Psoas muscle (tissue), 8 donors: ENCODE measurements at regions of chr3 and their contacts with region 1.

Region 1: GRCh38 chr3:16550676-16551341 is 37.3 kb upstream of the RFTN1 start:
- DNase-seq: peak; percentile 32 to 60
- ATAC-seq: peak; percentile 90 to 98 (median 96)
- H3K4me3 ChIP-seq: no peak overlapping the region
- H3K27ac ChIP-seq: no peak overlapping the region
- H3K4me1 ChIP-seq: peaks cover 4% of the 10 kb centered on the region
- H3K27me3 ChIP-seq: no peaks in the 10 kb centered on the region
- CTCF ChIP-seq: peak; percentile 94

Region 2: DNA sequence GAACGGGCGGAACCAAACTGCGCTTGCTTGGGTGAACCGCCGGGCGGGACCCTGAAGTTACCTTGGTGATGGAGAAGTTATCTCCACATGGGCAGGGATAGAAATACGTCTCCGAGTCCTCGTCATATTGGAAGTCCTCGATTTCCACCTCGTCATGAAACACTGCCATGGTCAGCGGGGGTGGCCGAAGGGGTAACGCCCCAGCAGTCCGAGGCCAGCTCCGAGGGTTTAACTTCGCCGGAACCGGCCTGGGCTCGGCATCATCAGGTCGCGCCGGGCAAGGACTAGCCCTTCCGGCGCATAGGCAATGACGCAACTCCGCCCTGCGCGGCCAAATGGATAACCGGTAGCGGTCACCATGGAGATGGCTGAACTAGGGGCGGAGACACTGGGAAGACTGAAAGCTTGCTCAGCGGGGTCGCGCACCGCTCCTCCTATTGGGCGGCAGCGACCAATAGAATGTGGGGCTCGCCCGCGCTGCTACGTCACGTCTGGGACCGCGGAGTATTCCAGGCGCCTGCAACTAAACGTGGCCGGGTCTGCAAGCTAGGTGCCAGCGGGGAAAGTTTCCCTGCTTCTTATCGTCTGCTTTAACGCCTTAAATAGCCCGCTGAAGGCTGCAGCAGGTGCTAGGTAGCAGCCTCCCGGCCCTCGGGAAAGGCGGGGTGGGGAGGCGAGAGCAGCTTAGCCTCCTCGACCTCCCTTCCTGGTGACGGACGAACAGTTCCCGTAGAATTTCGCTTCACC is 285.9 kb before region 1 on chr3 and contains the starts of genes DPH3 and OXNAD1:
- intact Hi-C with region 1: loop called (anchors 1 to 5 kb)
- DNase-seq: peak; percentile 100
- ATAC-seq: peak; percentile 97 to 99 (median 98)
- H3K4me3 ChIP-seq: peak within 1 kb of the TSS; percentile 74
- H3K27ac ChIP-seq: peak within 1 kb of the TSS; percentile 89
- H3K4me1 ChIP-seq: peaks cover 60% of the 10 kb centered on the region
- H3K27me3 ChIP-seq: no peaks in the 10 kb centered on the region
- CTCF ChIP-seq: peak; percentile 12
- total RNA-seq, gene DPH3: 23.5 to 53.3 (median 43.3) TPM
- total RNA-seq, gene OXNAD1: 5.4 to 15.5 (median 9.0) TPM

Region 3: DNA sequence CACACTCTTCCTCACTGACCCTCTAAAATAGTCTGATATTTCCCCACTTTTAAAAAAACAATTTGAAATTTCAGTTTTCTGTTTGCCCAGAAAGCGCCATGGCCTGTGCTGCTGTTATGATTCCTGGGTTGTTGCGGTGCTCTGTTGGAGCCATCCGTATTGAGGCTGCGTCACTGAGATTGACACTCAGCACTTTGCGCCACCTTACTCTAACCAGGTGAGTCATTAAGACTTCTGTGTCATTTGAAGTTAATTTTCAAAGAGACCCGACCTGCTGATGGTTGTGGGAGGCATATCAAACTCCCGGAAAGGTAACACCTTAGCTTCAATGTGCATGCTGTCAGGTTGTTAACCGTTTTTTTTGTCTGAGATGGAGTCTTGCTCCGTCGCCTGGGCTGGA is 280.0 kb before region 1 on chr3:
- intact Hi-C with region 1: loop called (anchors 1 to 5 kb)
- DNase-seq: no peak
- ATAC-seq: no peak
- H3K4me3 ChIP-seq: no peak overlapping the region
- H3K27ac ChIP-seq: no peak overlapping the region
- H3K4me1 ChIP-seq: peaks cover 29% of the 10 kb centered on the region
- H3K27me3 ChIP-seq: no peaks in the 10 kb centered on the region
- CTCF ChIP-seq: no peak

Region 4: DNA sequence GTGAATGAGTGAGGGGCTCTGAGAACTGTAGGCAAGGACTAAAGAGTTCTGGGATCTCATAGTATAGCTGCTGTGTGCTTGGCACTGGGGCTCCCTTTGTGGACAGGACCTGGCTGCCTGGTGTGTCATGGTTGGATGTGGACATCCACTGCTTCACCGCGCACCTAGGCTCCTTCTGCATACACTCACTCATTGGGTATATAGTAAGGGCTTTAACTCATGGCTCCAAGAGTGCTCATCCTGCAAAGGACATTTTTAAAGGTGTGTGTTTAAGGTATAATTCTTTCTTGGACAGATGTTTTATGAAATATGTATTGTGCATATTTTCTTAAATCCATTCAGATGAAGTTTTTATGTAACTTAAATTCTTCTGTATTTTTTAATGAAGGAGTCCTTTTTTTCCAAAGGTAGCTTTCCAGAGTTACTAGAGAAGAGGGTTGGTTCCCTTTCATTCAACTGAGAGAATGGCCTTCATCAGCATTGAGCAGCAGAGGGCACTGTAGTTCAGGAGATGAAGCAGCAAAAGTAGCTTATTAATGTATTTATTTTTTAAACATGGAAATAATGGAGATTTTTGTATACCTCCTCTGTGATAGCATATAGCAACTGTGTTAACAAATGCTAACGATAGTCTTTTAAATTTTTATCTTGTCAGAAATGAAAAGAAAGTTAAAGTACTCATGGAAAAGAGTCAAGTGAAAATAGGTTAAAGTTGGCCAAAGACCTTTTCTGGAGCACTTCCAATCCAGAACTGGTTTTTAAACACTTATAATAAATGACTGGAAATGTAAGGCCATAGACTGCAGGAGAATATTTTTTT is 260.6 kb before region 1 on chr3:
- intact Hi-C with region 1: loop called (anchors 1 to 2 kb)
- DNase-seq: no peak
- ATAC-seq: peak in 2 of 4 donors; percentile 38 to 65
- H3K4me3 ChIP-seq: no peak overlapping the region
- H3K27ac ChIP-seq: peak overlapping the region; percentile 80
- H3K4me1 ChIP-seq: peaks cover 36% of the 10 kb centered on the region
- H3K27me3 ChIP-seq: no peaks in the 10 kb centered on the region
- CTCF ChIP-seq: peak; percentile 81

Region 5: GRCh38 chr3:16448639-16449070 is 102.2 kb before region 1 on chr3:
- intact Hi-C with region 1: no loop called
- DNase-seq: peak; percentile 78 to 88
- ATAC-seq: peak; percentile 93 to 99 (median 98)
- H3K4me3 ChIP-seq: no peak overlapping the region
- H3K27ac ChIP-seq: peak overlapping the region; percentile 50
- H3K4me1 ChIP-seq: peaks cover 20% of the 10 kb centered on the region
- H3K27me3 ChIP-seq: no peaks in the 10 kb centered on the region
- CTCF ChIP-seq: no peak

Region 6: GRCh38 chr3:16658004-16658920 is 107.5 kb after region 1 on chr3:
- intact Hi-C with region 1: no loop called
- DNase-seq: no peak
- ATAC-seq: peak in 2 of 4 donors; percentile 27 to 57
- H3K4me3 ChIP-seq: no peak overlapping the region
- H3K27ac ChIP-seq: no peak overlapping the region
- H3K4me1 ChIP-seq: no peaks in the 10 kb centered on the region
- H3K27me3 ChIP-seq: no peaks in the 10 kb centered on the region
- CTCF ChIP-seq: no peak